Right cardiac atrium (tissue), 5 donors: ENCODE measurements at regions of chr4 and their contacts with region 1.

Region 1: GRCh38 chr4:105605493-105605892 is 53.1 kb downstream of the ARHGEF38 start:
- DNase-seq: no peak
- ATAC-seq: no peak
- H3K4me3 ChIP-seq: no peak overlapping the region
- H3K27ac ChIP-seq: no peak overlapping the region
- H3K4me1 ChIP-seq: peaks cover 2% of the 10 kb centered on the region
- H3K27me3 ChIP-seq: no peaks in the 10 kb centered on the region

Region 2: GRCh38 chr4:105440890-105441289 is 164.6 kb before region 1 on chr4:
- intact Hi-C with region 1: no loop called
- DNase-seq: no peak
- ATAC-seq: no peak
- H3K4me3 ChIP-seq: no peak overlapping the region
- H3K27ac ChIP-seq: no peak overlapping the region
- H3K4me1 ChIP-seq: no peaks in the 10 kb centered on the region
- H3K27me3 ChIP-seq: no peaks in the 10 kb centered on the region

Region 3: DNA sequence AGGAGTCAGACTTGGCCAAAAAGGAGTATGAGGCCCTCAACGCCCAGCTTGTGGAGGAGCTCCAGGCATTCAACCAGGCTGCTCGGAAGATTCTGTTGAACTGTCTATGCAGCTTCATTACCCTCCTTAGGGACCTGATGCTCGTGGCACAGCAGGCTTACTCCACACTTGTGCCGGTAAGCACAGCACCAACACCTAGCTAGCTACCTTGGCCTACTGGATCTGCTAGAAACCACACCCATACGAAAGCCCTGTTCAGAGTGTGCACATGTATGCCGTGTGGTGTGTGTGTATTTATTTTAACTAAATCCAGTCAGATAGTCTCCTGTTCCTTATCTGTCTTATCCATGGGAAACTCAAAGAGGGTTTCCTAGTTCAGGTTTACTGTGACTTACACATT is 53.7 kb after region 1 on chr4:
- intact Hi-C with region 1: loop called in 1 of 4 experiments (anchors 2 kb)
- DNase-seq: no peak
- ATAC-seq: no peak
- H3K4me3 ChIP-seq: no peak overlapping the region
- H3K27ac ChIP-seq: no peak overlapping the region
- H3K4me1 ChIP-seq: no peaks in the 10 kb centered on the region
- H3K27me3 ChIP-seq: no peaks in the 10 kb centered on the region